H1 (cell line): ENCODE measurements at regions of chr4 and their contacts with region 1.

Region 1: DNA sequence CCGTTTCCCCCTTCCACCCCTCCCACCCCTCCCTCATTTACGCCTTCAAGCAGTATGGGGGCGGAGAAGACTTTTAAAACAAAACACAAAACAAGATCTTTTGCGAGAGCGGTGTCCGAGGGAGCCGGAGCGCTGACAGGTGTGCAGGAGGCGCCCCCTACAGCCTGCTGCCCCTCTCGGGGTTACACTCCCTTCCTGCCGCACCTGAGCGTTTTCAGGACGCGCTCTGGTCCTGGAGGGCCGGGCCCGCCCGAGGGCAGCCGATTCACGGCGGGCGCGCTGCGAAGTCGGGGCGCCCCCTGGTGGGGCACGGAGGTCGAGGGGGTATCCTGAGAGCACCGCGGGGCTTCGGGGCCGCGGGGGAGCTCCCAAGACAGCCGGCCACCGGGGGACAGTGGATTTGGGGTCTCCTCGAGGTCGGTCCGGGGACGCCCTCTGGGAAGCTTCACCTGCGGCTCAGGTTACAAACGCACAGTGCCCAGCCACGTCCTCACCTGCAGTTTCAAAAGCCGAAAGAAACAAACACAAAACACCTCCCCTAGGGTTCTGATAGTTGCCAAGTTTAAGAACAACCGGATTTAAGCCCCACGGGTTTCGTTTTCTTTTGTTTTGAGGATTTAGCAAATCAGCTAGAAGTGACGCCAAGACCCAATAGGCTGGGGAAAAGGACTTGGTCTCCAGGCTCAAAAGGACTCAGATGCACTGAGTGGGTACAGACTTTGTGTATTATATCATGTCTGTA is 8.0 kb upstream of the NEUROG2 start:
- DNase-seq: peak; percentile 84 to 98
- H3K4me3 ChIP-seq: peak overlapping the region; percentile 27 to 58 (median 32); a peak in 5 of 8 replicates
- H3K27ac ChIP-seq: no peak overlapping the region
- H3K4me1 ChIP-seq: peaks cover 9 to 18% (median 14%) of the 10 kb centered on the region in 4 experiments; a peak in 6 of 7 replicates
- H3K27me3 ChIP-seq: peaks cover 40 to 60% (median 47%) of the 10 kb centered on the region in 4 experiments
- CTCF ChIP-seq: peak in 2 of 3 experiments; percentile 96 to 98; a peak in 3 of 4 replicates
- EP300 ChIP-seq: no peak
- POLR2A ChIP-seq: no peak
- RAD21 ChIP-seq: peak; percentile 91 to 98

Region 2: DNA sequence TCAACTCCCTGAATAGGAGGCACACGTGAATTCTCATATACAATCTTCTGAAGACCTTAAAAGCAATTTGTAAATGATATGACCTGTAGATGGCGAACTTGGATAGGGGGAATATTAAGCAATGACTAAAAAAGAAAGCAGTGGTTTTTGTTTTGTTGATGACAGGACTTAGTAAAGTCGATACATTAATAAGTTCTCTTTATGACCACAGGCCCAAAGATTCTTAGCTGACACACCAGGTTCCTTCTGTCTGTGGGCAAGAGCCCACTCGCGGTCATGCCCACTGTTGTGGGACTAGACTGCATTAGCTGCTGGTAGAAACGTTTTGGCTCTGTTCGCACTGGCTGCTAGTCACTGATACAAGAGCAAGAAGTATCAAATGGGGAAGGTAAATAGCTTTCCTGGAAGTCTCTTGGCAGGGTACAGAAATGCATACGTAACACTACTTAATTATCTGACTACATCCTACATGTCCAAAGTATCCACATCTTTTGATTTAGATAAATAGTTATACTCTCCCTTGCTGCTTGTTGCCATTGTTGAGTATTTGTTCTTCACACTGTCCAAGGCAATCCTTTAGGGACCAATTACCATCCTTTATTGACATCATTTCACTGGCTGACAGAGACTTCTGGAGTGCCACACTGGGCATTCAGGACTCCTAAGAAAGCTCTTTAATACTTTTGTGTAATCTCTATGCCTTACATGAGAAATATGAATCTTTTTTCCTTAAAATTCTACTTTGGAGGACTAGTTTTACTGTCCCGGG is 195.8 kb before region 1 on chr4:
- CTCF ChIA-PET with region 1: interaction called, 133 read pairs
- POLR2A ChIA-PET with region 1: interaction called, 3 read pairs
- DNase-seq: no peak
- H3K4me3 ChIP-seq: no peak overlapping the region
- H3K27ac ChIP-seq: no peak overlapping the region
- H3K4me1 ChIP-seq: peaks cover 0 to 2% (median 0%) of the 10 kb centered on the region in 4 experiments; a peak in 1 of 7 replicates
- H3K27me3 ChIP-seq: no peaks in the 10 kb centered on the region; a peak in 2 of 7 replicates
- CTCF ChIP-seq: peak in 2 of 3 experiments; percentile 38 to 49; a peak in 2 of 4 replicates
- EP300 ChIP-seq: no peak
- POLR2A ChIP-seq: no peak
- RAD21 ChIP-seq: peak; percentile 80 to 84

Region 3: DNA sequence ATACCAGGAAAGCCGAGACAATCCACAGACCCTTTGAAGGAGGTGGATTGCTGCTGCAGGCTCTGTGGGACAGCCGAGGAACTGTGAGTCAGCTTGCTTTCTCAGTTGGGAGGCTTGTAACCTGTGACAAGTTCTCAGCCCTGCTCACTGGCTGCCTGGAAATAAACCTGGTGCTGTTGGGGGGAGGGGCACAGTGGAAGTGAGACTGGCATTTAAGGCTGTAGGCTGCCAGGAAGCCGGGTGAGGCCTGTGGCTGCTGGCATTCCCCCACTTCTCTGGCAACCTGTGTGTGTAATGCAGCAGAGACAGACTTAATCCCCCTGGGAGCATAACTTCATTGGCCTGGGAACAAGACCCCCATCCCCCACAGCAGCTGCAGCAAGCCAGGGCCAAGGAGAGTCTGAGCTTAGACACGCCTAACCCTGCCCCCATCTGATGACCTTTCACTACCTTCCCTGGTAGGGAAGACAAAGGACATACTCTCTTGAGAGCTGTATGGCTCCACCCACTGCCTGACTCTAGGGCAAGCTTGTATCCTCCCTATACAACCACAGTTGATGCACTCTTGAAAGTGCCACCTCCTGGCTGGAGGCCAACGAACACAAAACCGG is 162.6 kb before region 1 on chr4:
- CTCF ChIA-PET with region 1: interaction called, 25 read pairs
- POLR2A ChIA-PET with region 1: no interaction called
- DNase-seq: peak; percentile 44 to 68
- H3K4me3 ChIP-seq: peak overlapping the region in 2 of 4 experiments; percentile 10 to 36; a peak in 2 of 8 replicates
- H3K27ac ChIP-seq: peak overlapping the region; percentile 61
- H3K4me1 ChIP-seq: peaks cover 3 to 10% (median 6%) of the 10 kb centered on the region in 4 experiments; a peak in 6 of 7 replicates
- H3K27me3 ChIP-seq: no peaks in the 10 kb centered on the region
- CTCF ChIP-seq: peak; percentile 6 to 38 (median 35)
- EP300 ChIP-seq: peak in 1 of 2 experiments; percentile 84; a peak in 1 of 3 replicates
- POLR2A ChIP-seq: peak in 1 of 2 experiments; percentile 67; a peak in 1 of 3 replicates
- RAD21 ChIP-seq: peak; percentile 11 to 34; a peak in 2 of 4 replicates

Region 4: GRCh38 chr4:112403081-112403945 is 120.6 kb before region 1 on chr4:
- CTCF ChIA-PET with region 1: interaction called, 12 read pairs
- POLR2A ChIA-PET with region 1: no interaction called
- DNase-seq: no peak
- H3K4me3 ChIP-seq: peak overlapping the region in 1 of 4 experiments; percentile 31; a peak in 2 of 8 replicates
- H3K27ac ChIP-seq: no peak overlapping the region
- H3K4me1 ChIP-seq: peaks cover 0 to 11% (median 3%) of the 10 kb centered on the region in 4 experiments; a peak in 4 of 7 replicates
- H3K27me3 ChIP-seq: no peaks in the 10 kb centered on the region
- CTCF ChIP-seq: no peak
- EP300 ChIP-seq: no peak
- POLR2A ChIP-seq: no peak
- RAD21 ChIP-seq: no peak

Region 5: GRCh38 chr4:112509243-112510141 is 14.4 kb before region 1 on chr4:
- CTCF ChIA-PET with region 1: interaction called, 133 read pairs
- POLR2A ChIA-PET with region 1: interaction called, 9 read pairs
- DNase-seq: peak in 1 of 2 experiments; percentile 66
- H3K4me3 ChIP-seq: peak overlapping the region in 2 of 4 experiments; percentile 8 to 41; a peak in 4 of 8 replicates
- H3K27ac ChIP-seq: no peak overlapping the region
- H3K4me1 ChIP-seq: peaks cover 14 to 21% (median 19%) of the 10 kb centered on the region in 4 experiments
- H3K27me3 ChIP-seq: peaks cover 65 to 87% (median 78%) of the 10 kb centered on the region in 4 experiments
- CTCF ChIP-seq: no peak
- EP300 ChIP-seq: no peak
- POLR2A ChIP-seq: no peak
- RAD21 ChIP-seq: no peak; a peak in 1 of 4 replicates

Region 6: GRCh38 chr4:112751447-112751846 is 227.5 kb after region 1 on chr4:
- CTCF ChIA-PET with region 1: no interaction called
- POLR2A ChIA-PET with region 1: no interaction called
- DNase-seq: peak in 1 of 2 experiments; percentile 38
- H3K4me3 ChIP-seq: no peak overlapping the region; a peak in 2 of 8 replicates
- H3K27ac ChIP-seq: peak overlapping the region; percentile 43; the same call in 1 of the 2 replicates
- H3K4me1 ChIP-seq: peaks cover 4 to 21% (median 13%) of the 10 kb centered on the region in 4 experiments; a peak in 6 of 7 replicates
- H3K27me3 ChIP-seq: no peaks in the 10 kb centered on the region
- CTCF ChIP-seq: no peak
- EP300 ChIP-seq: 0 out of 3 replicates have a peak, but pooled peaks of 1 of the 2 experiments have one; percentile 13
- POLR2A ChIP-seq: 0 out of 3 replicates have a peak, but pooled peaks of 1 of the 2 experiments have one; percentile 39
- RAD21 ChIP-seq: 0 out of 4 replicates have a peak, but pooled peaks of 1 of the 2 experiments have one; percentile 1